ENCODE measurements at regions of chr16 and their contacts with region 1.

Region 1: GRCh38 chr16:71961066-71962039 is 38.8 kb downstream of the PKD1L3 start:
- DNase-seq: peak; percentile 56
- H3K4me3 ChIP-seq: no peak overlapping the region
- H3K27ac ChIP-seq: no peak overlapping the region
- H3K27me3 ChIP-seq: peaks cover 2% of the 10 kb centered on the region
- CTCF ChIP-seq: peak; percentile 90

Region 2: GRCh38 chr16:71859762-71860521 is 101.4 kb before region 1 on chr16:
- CTCF ChIA-PET with region 1: interaction called, 12 read pairs
- POLR2A ChIA-PET with region 1: no interaction called
- DNase-seq: no peak
- H3K4me3 ChIP-seq: no peak overlapping the region
- H3K27ac ChIP-seq: no peak overlapping the region
- H3K27me3 ChIP-seq: no peaks in the 10 kb centered on the region
- CTCF ChIP-seq: no peak

Region 3: DNA sequence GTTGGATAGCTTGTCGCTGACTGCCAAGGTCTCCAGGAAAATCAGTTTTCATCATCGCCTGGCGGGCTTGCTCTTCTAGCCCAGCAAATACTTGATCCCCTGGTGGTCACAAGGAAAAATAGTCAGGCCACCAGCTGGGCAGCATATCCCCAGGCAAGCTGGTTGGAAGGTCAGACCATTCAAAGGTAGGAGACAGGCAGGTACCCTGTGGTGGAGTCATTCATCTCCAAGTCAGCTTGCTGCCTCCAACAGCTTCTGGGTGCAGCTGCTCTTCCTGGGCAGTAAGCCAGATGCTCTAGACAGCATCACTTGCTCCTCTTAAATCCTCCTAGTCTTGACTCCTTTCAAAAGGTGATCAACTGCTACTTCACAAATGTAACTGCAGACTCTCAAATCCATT is 93.4 kb before region 1 on chr16:
- CTCF ChIA-PET with region 1: interaction called, 3 read pairs
- POLR2A ChIA-PET with region 1: interaction called, 12 read pairs
- DNase-seq: no peak
- H3K4me3 ChIP-seq: no peak overlapping the region
- H3K27ac ChIP-seq: no peak overlapping the region
- H3K27me3 ChIP-seq: no peaks in the 10 kb centered on the region
- CTCF ChIP-seq: no peak

Region 4: DNA sequence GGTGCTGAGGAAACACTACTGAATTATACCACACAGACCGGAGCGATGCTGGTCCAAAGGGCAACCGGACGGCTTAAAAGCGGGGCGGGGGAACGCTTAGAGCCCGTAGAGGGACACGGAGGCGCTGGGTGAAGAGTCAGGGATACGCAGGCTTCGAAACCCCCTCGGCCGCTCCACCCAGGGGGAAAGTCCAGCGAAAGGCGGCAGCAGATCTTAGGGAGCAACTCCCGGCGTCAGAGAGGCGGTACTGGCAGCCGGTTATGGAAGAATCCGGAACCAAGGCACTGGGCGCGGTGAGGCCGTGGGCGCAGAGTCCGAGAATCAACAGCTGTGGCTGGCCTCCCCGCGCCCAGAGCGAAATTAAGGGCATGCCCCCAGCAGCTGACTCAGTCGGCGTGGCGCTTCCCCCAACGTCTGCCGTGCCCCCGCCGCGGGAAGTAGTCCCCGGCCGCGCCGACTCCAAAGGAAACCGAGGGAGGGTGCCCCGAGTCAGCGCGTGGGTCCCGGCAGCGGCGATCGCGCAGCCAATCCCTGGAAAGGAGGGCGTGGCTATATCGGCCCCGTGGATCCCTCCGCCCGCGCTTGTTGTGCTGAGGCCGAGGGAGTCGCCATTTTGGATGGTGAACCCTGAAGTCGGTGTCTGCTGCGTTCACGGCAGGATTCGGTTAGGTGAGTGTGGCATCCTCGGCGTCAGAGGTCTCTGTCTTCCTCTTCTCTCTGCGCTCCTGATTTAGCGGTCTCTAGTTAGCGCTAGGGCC is 66.3 kb before region 1 on chr16 and contains the start of gene IST1:
- CTCF ChIA-PET with region 1: interaction called, 12 read pairs
- POLR2A ChIA-PET with region 1: no interaction called
- DNase-seq: peak; percentile 98
- H3K4me3 ChIP-seq: peak within 1 kb of the TSS; percentile 91
- H3K27ac ChIP-seq: peak within 1 kb of the TSS; percentile 98
- H3K27me3 ChIP-seq: no peaks in the 10 kb centered on the region
- CTCF ChIP-seq: no peak
- polyA plus RNA-seq, gene IST1: 225 and 260 TPM in 2 replicates

Region 5: DNA sequence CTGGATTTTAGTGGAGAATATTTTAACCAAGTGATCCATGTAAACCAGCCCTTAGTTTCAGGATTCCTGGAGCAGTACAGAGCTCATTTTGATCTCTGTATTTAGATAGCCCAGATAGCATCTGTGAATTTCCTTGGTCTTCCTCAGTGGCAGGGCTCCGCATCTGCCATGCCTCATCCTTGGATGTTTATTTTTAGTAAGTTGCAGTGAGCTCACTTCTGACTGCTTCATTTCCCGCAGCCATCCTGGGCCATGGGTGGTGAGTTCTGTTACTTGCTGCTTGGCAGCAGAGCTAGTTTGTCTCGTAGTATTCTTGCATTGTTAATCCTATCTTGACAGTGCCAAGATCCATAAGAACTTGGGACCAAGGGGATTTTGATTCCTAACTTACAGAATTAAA is 32.3 kb before region 1 on chr16:
- CTCF ChIA-PET with region 1: interaction called, 24 read pairs
- POLR2A ChIA-PET with region 1: interaction called, 4 read pairs
- DNase-seq: peak; percentile 68
- H3K4me3 ChIP-seq: no peak overlapping the region
- H3K27ac ChIP-seq: no peak overlapping the region
- H3K27me3 ChIP-seq: no peaks in the 10 kb centered on the region
- CTCF ChIP-seq: no peak

Region 6: GRCh38 chr16:71974068-71974818 is 12.9 kb after region 1 on chr16:
- CTCF ChIA-PET with region 1: interaction called, 26 read pairs
- POLR2A ChIA-PET with region 1: no interaction called
- DNase-seq: no peak
- H3K4me3 ChIP-seq: no peak overlapping the region
- H3K27ac ChIP-seq: no peak overlapping the region
- H3K27me3 ChIP-seq: peaks cover 2% of the 10 kb centered on the region
- CTCF ChIP-seq: no peak